Activated CD4-positive, alpha-beta memory T cell treated with anti-CD3 and anti-CD28 coated beads for 36 hours (primary cell): ENCODE measurements at regions of chr4 and their contacts with region 1.

Region 1: DNA sequence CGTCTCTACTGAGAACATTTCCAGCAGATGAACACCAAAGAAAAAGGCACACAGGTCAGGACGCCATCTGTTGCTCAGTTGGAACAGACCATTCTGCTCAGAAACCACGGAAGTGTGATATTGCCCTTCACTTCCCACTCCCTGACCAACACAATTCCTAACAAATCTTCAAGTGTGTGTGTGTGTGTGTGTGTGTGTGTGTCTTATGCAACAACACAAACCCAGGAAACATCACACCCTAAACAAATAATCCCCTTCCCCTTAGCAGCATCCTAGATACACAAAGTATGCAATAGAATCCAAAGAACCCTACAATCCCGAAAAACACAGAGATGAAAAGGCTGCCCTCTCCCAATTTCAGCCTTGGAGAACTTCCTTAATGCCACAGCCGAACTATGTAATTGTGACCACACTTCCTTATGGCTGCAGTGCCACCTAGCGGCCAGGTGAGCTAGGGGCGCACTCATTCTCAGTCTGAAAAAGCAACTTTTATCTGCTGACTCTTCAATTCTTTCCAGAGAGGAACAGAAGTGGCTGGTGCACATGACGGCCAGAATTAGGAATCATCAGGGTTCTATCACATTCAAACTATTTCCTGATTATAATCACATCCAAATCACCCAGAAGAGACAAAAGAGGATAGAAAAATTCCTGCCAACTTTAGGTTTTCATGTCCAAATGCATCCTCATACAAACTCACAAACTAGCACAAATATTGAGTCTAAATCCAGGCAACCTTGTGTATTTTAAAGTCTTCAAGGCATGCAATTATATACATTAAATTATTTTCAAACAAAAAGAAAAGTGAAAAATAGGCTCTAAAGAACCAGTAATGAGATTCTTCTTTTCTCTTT is 164.9 kb downstream of the DHX15 start:
- DNase-seq: peak; percentile 76
- H3K4me3 Mint-ChIP-seq: no peak overlapping the region
- H3K27ac Mint-ChIP-seq: no peak overlapping the region
- H3K4me1 Mint-ChIP-seq: peaks cover 3% of the 10 kb centered on the region
- H3K27me3 Mint-ChIP-seq: peaks cover 3% of the 10 kb centered on the region

Region 2: DNA sequence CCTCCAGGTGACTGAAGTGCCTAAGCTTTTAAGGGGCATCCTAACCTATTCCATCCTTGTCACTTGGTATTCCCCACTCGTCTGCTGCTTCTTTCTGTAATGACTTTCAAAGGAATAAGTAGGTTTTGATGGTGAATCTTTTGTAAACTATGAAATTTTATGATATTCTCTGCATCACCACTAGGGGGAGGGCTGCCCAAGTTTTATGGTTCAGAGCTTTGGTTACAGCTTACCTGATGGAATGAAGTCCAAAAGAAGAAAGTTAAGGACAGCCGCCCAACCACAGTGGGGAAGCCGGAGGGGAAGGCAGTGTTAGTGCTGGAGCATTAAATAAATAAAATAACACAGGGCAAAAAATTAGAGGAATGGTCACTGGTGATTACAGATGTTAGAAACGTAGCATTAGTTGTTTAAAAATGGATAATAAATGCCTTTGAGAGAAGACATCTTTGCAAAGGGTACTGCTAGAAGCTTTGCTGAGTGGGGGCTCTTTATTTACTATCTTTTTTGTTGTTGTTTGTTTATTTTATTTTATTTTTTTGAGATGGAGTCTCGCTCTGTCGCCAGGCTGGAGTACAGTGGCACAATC is 1521.8 kb before region 1 on chr4:
- CTCF ChIA-PET with region 1: interaction called, 11 read pairs
- POLR2A ChIA-PET with region 1: no interaction called
- intact Hi-C with region 1: loop called (anchors 1 kb)
- DNase-seq: peak; percentile 19
- H3K4me3 Mint-ChIP-seq: no peak overlapping the region
- H3K27ac Mint-ChIP-seq: no peak overlapping the region
- H3K4me1 Mint-ChIP-seq: no peaks in the 10 kb centered on the region
- H3K27me3 Mint-ChIP-seq: peaks cover 2% of the 10 kb centered on the region

Region 3: GRCh38 chr4:22962295-22962694 is 1457.1 kb before region 1 on chr4:
- CTCF ChIA-PET with region 1: no interaction called
- POLR2A ChIA-PET with region 1: no interaction called
- intact Hi-C with region 1: loop called (anchors 5 kb)
- DNase-seq: no peak
- H3K4me3 Mint-ChIP-seq: no peak overlapping the region
- H3K27ac Mint-ChIP-seq: no peak overlapping the region
- H3K4me1 Mint-ChIP-seq: no peaks in the 10 kb centered on the region
- H3K27me3 Mint-ChIP-seq: no peaks in the 10 kb centered on the region

Region 4: DNA sequence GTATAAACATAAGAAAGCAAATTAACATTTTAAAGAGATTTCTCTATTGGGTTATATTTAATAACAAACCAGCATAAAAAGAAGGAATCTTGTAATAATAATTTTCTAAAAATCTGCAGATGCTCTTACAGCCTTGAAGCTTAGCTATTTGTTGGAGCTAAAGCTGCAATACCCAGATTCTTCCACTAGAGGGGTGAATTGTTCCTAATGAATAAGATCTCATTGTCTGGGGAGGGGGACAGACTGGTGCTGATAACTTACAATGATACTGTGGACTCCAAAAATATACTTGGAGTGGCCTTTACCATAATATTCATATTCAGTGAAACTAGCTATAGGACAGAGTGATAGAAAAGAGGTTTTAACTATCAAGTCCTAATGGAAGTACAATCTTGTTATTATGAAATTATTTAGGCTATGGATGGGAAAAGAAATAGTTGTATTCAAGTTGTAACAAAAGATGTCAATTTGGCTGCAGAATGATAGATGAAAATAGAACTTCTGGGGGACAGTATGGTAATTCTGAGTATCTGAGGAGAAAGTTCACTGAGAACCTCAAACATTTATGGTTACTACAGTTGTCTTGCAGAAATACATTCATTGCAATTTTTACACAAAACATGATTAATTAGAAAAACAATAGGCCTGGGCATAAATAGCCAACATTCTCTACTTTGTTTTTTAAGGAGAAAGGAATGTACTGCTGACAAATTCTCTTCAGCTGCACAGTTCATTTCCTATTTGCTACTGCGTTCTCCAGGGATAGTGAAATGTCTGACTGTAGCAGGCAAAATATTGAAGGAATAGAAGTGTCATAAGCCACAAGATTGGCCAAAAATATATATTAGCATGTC is 1283.4 kb before region 1 on chr4:
- CTCF ChIA-PET with region 1: interaction called, 6 read pairs
- POLR2A ChIA-PET with region 1: no interaction called
- intact Hi-C with region 1: loop called (anchors 2 kb)
- DNase-seq: no peak
- H3K4me3 Mint-ChIP-seq: no peak overlapping the region
- H3K27ac Mint-ChIP-seq: no peak overlapping the region
- H3K4me1 Mint-ChIP-seq: no peaks in the 10 kb centered on the region
- H3K27me3 Mint-ChIP-seq: no peaks in the 10 kb centered on the region